Left cardiac atrium (tissue), 4 donors: ENCODE measurements at regions of chr21 and their contacts with region 1.

Region 1: DNA sequence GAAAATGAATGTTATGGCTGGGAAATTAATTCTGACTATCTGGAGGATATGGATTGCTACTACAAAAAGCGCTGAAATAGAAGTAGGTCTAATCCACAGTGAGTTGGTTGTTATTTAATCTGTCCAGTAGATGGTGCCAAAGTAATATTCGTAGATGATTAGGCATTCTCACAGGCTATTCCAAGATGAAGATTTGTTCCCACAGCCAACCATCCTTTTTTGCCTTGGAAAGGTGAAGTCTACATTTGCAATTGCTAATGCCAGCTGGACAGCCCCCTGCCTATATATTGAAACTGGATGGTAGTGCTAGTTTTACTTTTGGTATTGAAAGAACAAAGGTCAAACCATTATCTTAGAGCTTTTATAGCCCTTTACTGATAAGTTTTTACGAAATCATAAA is 43.8 kb downstream of the RBM11 start:
- DNase-seq: no peak
- ATAC-seq: peak; percentile 65 to 72

Region 2: DNA sequence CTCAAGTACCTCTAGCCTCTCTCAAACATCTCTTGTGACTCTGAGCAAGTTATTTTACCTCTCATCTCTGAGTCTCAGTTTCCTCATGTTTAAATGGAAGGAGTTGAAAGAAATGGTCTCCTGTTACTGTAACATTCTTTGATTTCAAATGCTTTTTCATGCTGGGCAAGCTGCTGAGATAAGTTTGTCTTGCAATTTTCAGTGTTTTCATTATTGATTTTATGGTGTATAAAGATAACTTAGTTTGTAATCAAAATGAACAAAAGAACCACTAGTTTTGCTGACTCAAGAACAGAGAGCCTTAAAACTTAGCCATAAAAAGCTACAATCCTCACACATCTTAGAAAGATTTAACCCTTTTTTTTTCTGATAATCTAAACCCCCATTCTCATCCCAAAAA is 53.5 kb before region 1 on chr21:
- intact Hi-C with region 1: no loop called
- DNase-seq: no peak
- ATAC-seq: no peak

Region 3: DNA sequence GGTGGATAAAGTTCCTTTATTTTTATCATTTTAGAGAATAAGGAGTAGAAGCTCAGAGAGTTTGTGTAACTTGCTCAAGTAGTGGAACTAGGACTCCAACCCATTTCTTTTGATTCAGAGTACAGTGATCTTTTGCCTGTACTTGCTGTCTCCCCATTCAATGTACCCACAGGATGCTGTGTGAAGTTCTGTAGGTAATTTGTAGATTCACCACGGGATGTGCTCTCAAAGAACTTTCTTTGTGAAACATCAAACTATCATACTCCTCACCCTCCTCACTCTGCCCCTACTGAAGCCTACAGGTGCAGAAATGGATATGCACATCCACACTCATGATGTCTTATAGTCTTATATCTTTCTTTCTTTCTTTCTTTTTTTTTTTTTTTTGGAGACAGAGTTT is 189.0 kb after region 1 on chr21:
- intact Hi-C with region 1: loop called in 1 of 2 experiments (anchors 10 kb)
- DNase-seq: no peak
- ATAC-seq: no peak

Region 4: GRCh38 chr21:15483138-15483780 is 1223.5 kb after region 1 on chr21:
- intact Hi-C with region 1: loop called in 1 of 2 experiments (anchors 10 kb)
- DNase-seq: peak; percentile 91
- ATAC-seq: peak; percentile 100

Region 5: DNA sequence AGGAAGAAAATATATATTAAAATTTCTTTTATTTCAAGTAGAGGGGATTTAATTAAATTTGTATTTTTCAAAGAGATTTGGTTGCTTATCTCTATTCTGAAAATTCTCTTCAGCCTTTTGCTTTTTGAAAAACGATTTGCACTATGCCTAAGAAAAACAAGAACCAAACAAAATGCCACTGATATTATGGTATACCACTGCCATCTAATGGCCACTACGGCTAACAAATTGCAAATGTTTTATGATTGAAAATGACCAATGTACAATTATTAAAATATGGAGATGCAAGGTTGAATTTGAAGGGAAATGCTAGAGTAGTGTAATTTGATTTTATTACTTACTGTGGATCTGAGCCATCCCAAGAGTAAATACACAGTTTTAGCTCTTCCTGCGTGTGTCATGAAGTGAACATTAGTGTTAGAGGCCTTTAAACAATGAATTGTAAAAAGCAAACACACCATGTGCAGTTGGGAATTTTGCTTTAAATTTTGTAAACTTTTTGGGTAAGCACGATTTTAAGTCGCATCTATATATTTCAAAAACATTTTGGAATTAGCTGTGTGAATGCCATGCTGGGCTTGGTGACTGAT is 1332.6 kb after region 1 on chr21:
- intact Hi-C with region 1: loop called in 1 of 2 experiments (anchors 5 kb)
- DNase-seq: no peak
- ATAC-seq: no peak